ENCODE measurements at regions of chr11 and their contacts with region 1.

Region 1: DNA sequence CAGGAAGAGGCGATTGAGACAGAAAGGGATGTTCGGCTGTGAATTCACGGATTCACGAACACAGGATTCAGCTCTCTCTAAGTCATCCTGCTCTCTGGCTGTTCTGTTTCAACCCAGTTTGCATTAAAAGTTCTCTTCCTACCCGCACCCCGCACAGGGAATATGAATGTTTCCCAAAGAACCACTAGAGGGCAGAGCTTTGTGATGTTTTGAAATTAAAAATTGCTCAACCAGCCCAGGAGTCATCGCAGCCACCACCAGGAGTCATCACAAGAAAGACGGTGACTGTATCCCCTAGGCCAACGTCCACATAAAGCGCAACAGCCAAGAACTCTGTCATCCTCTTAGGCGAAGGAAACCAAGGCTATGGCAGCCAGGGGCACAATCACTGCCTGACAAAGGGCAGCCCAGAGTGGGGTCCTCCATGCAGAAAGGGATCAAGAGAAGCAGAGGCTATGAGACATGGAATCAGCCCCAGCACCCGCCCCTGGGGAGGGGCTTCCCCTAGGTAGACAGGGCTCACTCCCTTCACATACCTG is 122.4 kb downstream of the WT1 start:
- DNase-seq: no peak
- ATAC-seq: peak; percentile 78
- H3K4me3 ChIP-seq: no peak overlapping the region
- H3K27ac ChIP-seq: no peak overlapping the region
- H3K4me1 ChIP-seq: no peaks in the 10 kb centered on the region
- H3K27me3 ChIP-seq: peaks cover 0 to 2% of the 10 kb centered on the region in 2 experiments; a peak in 1 of 4 replicates
- CTCF ChIP-seq: peak; percentile 49 to 50 (median 49); a peak in 5 of 6 replicates
- EP300 ChIP-seq: no peak
- POLR2A ChIP-seq: no peak
- RAD21 ChIP-seq: 0 out of 2 replicates have a peak, but pooled peaks have one; percentile 19

Region 2: DNA sequence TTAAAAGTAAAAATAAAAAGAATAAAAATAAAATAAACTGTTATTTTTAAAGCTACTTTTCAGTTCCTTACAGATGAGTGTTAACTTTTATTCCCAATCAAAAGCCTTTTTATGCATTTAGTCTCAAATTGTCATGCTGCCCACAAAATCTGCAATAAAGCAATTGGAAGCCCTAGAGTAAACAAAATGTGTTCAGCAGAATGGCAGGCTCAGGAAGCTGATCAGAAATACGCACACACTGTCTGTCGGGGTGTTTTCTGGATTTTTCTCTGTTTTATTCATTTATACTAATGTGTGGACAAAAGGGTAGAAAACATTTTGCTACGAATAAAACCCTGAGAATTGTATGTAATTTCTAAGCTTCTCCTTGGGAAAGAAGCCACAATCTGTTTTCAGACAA is 59.2 kb before region 1 on chr11:
- CTCF ChIA-PET with region 1: no interaction called
- POLR2A ChIA-PET with region 1: no interaction called
- RAD21 ChIA-PET with region 1: no interaction called
- SMC1A ChIA-PET with region 1: no interaction called
- in situ Hi-C with region 1: no loop called
- intact Hi-C with region 1: no loop called
- DNase-seq: no peak
- ATAC-seq: no peak
- H3K4me3 ChIP-seq: no peak overlapping the region
- H3K27ac ChIP-seq: no peak overlapping the region
- H3K4me1 ChIP-seq: no peaks in the 10 kb centered on the region
- H3K27me3 ChIP-seq: 0 out of 4 replicates have a peak, but pooled peaks cover 0 to 3% of the 10 kb centered on the region in 2 experiments
- CTCF ChIP-seq: no peak
- EP300 ChIP-seq: no peak
- POLR2A ChIP-seq: no peak
- RAD21 ChIP-seq: no peak

Region 3: DNA sequence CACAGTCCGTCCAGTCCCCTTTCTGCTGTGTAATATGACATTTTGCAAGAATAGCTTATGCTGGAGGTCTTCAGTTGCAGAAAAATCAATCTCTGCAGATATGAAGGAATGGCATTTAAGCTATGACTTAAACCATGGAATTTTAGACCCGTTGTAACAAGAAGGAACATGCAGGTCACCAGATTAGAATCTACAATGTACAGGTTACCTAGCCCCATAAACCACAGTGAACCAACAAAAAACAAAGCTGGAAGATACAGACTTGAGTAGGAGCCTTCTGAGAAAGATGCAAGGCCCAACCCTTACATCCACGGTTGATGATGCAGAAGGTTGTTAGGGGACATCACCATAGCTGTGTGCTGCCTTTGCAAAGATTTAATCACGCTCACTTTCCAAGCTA is 10.1 kb before region 1 on chr11:
- CTCF ChIA-PET with region 1: interaction called, 27 read pairs
- POLR2A ChIA-PET with region 1: no interaction called
- RAD21 ChIA-PET with region 1: interaction called, 7 read pairs
- SMC1A ChIA-PET with region 1: interaction called, 7 read pairs
- in situ Hi-C with region 1: no loop called
- intact Hi-C with region 1: no loop called
- DNase-seq: no peak
- ATAC-seq: no peak
- H3K4me3 ChIP-seq: no peak overlapping the region
- H3K27ac ChIP-seq: no peak overlapping the region
- H3K4me1 ChIP-seq: no peaks in the 10 kb centered on the region
- H3K27me3 ChIP-seq: no peaks in the 10 kb centered on the region
- CTCF ChIP-seq: no peak
- EP300 ChIP-seq: no peak
- POLR2A ChIP-seq: no peak
- RAD21 ChIP-seq: no peak